Testis (tissue), 5 donors: ENCODE measurements at regions of chr20 and their contacts with region 1.

Region 1: DNA sequence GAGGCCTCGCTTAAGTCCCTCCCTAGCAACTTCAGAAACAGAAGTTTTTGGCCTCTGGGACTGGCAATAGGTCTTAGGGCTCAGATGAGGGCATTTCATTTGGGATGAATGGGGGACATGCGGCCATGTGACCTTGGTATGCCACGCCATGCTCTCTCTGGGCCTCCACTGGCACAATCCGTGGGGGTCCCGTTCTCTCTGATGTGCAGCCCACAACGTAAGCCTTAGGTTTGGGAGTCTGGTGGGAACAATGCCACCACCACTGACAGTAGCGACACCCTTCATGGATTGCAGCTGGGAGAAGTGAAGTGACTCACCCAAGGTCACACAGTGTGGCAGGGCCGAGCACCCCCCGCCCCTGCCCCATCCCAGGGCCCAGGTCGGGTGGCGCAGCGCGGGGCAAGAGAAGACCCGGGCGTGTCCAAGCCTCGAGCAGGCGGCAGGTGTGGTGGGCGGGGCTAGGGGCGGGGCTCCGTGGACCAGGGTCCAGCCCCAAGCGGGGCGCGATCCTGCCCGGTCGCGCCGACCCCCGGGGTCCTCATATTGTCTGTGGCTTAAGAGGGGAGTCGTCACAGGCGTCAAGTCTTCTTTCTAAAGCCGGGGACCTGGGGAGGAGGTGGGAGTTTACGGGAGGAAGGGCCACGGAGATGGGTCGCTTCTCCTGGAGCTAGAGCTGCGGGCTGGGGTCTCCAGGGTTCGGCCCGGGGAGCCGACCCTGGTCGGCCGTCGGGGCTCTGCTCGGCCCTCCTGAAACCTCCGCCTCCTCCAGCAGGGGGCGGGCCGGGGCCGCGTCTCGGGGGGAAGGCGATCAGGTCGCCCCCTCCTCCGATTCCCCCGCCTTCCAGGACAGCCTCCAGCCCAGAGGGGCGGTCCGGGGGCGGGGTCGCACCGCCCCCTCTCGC is 698 bp upstream of the CEBPB start:
- DNase-seq: peak; percentile 91
- H3K4me3 ChIP-seq: peak overlapping the region; percentile 91 to 92
- H3K27ac ChIP-seq: peak overlapping the region; percentile 96 to 98
- H3K4me1 ChIP-seq: peaks cover 16% of the 10 kb centered on the region
- H3K27me3 ChIP-seq: no peaks in the 10 kb centered on the region
- CTCF ChIP-seq: peak; percentile 72 to 86 (median 79)
- POLR2A ChIP-seq: no peak

Region 2: GRCh38 chr20:49610701-49611538 is 579.0 kb before region 1 on chr20:
- intact Hi-C with region 1: no loop called
- DNase-seq: peak; percentile 88
- H3K4me3 ChIP-seq: peak overlapping the region in 1 of 2 donors; percentile 17
- H3K27ac ChIP-seq: peak overlapping the region in 1 of 2 donors; percentile 17
- H3K4me1 ChIP-seq: no peaks in the 10 kb centered on the region
- H3K27me3 ChIP-seq: no peaks in the 10 kb centered on the region
- CTCF ChIP-seq: peak; percentile 99
- POLR2A ChIP-seq: no peak

Region 3: GRCh38 chr20:50308513-50309279 is 118.8 kb after region 1 on chr20:
- intact Hi-C with region 1: loop called (anchors 2 kb)
- DNase-seq: peak; percentile 91
- H3K4me3 ChIP-seq: no peak overlapping the region
- H3K27ac ChIP-seq: peak overlapping the region; percentile 66 to 90
- H3K4me1 ChIP-seq: peaks cover 50% of the 10 kb centered on the region
- H3K27me3 ChIP-seq: no peaks in the 10 kb centered on the region
- CTCF ChIP-seq: no peak
- POLR2A ChIP-seq: no peak

Region 4: DNA sequence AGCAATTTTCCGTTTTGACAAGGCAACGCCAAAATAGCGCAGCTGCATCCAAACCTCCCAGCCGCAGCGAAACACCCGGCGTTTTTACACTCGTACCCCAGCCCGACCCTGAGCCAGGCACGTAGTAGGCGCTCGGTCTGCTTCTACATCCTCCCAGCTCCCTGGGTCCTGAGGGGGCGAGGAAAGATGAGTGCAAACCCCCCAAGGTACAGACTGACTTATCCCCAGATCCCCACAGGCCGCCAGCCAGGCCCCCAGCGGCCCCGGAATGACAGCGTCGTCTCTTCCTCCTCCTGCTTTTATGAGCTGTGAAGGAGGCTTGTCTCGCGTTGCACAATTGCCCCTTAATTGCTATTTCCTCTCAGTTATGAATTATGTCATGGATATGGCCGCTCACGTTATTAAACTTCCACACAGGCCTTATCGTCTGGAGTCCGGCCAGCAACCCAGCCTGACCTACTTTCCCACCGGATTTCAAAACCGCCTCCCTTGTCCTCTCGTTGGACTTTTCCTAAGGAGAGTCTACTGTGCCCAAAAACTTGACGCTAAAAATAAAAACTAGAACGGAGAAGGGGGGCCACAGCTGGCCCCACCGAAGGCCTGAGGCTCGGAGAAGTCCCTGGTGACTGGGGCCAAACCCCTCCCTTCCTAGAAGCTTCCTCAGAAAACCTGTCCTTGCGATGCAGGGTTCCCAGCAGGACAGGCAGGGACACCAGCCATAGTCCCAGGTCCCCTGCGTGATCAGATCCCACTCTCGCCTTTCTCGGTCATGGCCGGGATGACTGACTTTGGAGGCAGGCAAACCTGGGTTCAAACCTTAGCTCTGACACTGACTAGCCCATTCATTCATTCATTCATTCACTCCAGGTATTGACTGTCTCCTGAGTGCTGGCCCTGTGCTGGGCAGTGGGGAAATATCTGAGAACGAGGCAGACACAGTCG is 189.4 kb after region 1 on chr20:
- intact Hi-C with region 1: loop called (anchors 10 kb)
- DNase-seq: peak; percentile 95
- H3K4me3 ChIP-seq: no peak overlapping the region
- H3K27ac ChIP-seq: peak overlapping the region; percentile 20 to 76
- H3K4me1 ChIP-seq: peaks cover 30% of the 10 kb centered on the region
- H3K27me3 ChIP-seq: no peaks in the 10 kb centered on the region
- CTCF ChIP-seq: no peak
- POLR2A ChIP-seq: no peak

Region 5: GRCh38 chr20:50460460-50461267 is 270.7 kb after region 1 on chr20:
- intact Hi-C with region 1: loop called (anchors 5 kb)
- DNase-seq: peak; percentile 92
- H3K4me3 ChIP-seq: no peak overlapping the region
- H3K27ac ChIP-seq: peak overlapping the region; percentile 55 to 59
- H3K4me1 ChIP-seq: peaks cover 24% of the 10 kb centered on the region
- H3K27me3 ChIP-seq: no peaks in the 10 kb centered on the region
- CTCF ChIP-seq: peak; percentile 86 to 96 (median 95)
- POLR2A ChIP-seq: no peak

Region 6: DNA sequence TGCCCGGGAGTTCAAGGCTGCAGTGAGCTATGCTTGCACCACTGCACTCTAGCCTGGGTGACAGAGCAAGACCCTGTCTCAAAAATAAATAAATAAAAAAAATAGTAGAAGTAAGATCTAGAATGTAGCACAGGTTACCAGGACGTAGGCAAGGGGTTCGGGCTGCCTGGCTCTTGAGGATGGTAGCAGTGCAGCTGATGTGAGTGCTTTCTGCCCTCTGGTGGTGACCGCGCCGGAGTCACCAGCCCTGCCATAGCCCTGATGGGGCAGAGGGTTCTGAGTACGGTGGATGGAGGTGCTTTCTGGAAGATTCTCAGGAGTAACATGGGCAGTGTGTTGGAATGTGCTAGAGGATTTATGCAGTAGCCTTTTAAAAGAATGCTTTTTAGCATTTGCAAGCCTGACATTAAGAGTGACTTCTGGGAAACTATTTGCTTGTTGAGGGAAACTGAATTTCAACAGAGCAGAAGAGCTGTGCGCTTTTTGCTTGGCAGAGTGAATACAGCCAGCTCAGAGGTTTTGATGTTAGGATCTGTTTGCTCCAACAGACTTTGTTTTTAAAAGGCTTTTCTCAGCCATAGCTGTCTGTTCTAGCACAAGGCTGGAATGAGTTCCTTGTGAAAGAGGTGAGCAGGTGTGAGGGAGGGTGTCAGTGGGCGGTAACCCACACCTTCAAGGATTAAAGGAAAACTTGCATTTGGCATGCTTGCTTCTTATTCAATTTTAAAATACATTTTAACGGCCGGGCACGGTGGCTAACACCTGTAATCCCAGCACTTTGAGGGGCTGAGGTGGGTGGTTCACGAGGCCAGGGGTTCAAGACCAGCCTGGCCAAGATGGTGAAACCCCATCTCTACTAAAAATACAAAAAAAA is 386.2 kb after region 1 on chr20:
- intact Hi-C with region 1: loop called (anchors 10 kb)
- DNase-seq: peak; percentile 88
- H3K4me3 ChIP-seq: no peak overlapping the region
- H3K27ac ChIP-seq: no peak overlapping the region
- H3K4me1 ChIP-seq: peaks cover 10% of the 10 kb centered on the region
- H3K27me3 ChIP-seq: no peaks in the 10 kb centered on the region
- CTCF ChIP-seq: peak; percentile 68 to 72 (median 69)
- POLR2A ChIP-seq: no peak